Right lobe of liver (tissue), 6 donors: ENCODE measurements at regions of chr2 and their contacts with region 1.

Region 1: GRCh38 chr2:100819764-100820421 is at the start of gene NPAS2:
- DNase-seq: peak; percentile 61 to 75 (median 69)
- ATAC-seq: peak; percentile 40 to 70 (median 64)
- H3K4me3 ChIP-seq: peak within 1 kb of the TSS; percentile 66 to 76 (median 73)
- H3K27ac ChIP-seq: peak within 1 kb of the TSS; percentile 44 to 95 (median 87)
- H3K4me1 ChIP-seq: peaks cover 0 to 39% (median 10%) of the 10 kb centered on the region in 4 donors
- H3K27me3 ChIP-seq: no peaks in the 10 kb centered on the region
- CTCF ChIP-seq: no peak
- POLR2A ChIP-seq: peak; percentile 41
- total RNA-seq, gene NPAS2: 8.8 to 33.3 (median 24.5) TPM

Region 2: DNA sequence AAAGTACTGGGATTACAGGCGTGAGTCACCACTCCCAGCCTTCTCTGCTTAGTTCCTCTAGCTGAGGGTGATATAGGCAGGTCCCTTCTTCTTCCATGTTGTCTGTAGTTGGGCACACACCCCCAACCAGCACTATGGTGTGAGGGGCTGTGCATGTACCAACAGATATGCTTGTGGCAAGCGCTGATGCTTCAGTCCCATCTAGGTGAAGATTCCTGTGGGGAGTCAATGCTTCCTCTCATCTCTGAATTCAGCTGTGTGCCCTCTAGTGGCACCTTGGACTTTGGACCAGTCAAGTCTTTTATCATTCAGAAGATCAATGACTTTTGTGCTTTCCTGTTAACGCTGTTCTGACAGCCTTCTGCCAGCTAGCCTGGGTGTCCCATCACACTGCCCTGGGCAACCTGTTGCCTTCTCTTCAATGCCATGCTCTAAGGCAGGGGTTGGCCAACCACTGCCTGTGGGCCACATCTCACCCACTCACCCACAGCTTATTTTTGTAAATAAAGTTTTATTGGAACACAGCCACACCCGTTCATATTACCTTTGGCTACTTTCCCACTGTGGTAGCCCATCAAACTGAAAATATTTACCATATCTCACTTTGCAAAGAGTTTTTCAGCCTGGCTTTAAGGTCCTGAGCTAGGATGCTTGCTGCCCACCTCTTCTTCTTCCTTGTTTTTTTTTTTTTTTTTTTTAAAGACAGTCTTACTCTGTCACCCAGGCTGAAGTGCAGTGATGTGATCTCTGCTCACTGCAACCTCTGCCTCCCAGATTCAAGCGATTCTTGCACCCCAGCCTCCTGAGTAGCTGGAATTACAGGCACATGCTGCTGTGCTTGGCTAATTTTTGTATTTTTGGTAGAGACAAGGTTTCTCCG is 51.0 kb after region 1 on chr2:
- intact Hi-C with region 1: no loop called
- DNase-seq: peak; percentile 45 to 75 (median 71)
- ATAC-seq: peak; percentile 78 to 90 (median 88)
- H3K4me3 ChIP-seq: no peak overlapping the region
- H3K27ac ChIP-seq: peak overlapping the region in 1 of 3 donors; percentile 50
- H3K4me1 ChIP-seq: peaks cover 0 to 37% (median 5%) of the 10 kb centered on the region in 4 donors
- H3K27me3 ChIP-seq: no peaks in the 10 kb centered on the region
- CTCF ChIP-seq: peak in 1 of 4 donors; percentile 19
- POLR2A ChIP-seq: no peak

Region 3: GRCh38 chr2:100882645-100883613 is 63.0 kb after region 1 on chr2:
- intact Hi-C with region 1: loop called in 1 of 2 experiments (anchors 10 kb)
- DNase-seq: peak; percentile 76 to 87 (median 83)
- ATAC-seq: peak; percentile 93 to 97 (median 96)
- H3K4me3 ChIP-seq: no peak overlapping the region
- H3K27ac ChIP-seq: peak overlapping the region; percentile 4 to 63 (median 22)
- H3K4me1 ChIP-seq: peaks cover 0 to 27% (median 8%) of the 10 kb centered on the region in 4 donors
- H3K27me3 ChIP-seq: no peaks in the 10 kb centered on the region
- CTCF ChIP-seq: no peak
- POLR2A ChIP-seq: no peak